H1 (cell line): ENCODE measurements at regions of chr2 and their contacts with region 1.

Region 1: DNA sequence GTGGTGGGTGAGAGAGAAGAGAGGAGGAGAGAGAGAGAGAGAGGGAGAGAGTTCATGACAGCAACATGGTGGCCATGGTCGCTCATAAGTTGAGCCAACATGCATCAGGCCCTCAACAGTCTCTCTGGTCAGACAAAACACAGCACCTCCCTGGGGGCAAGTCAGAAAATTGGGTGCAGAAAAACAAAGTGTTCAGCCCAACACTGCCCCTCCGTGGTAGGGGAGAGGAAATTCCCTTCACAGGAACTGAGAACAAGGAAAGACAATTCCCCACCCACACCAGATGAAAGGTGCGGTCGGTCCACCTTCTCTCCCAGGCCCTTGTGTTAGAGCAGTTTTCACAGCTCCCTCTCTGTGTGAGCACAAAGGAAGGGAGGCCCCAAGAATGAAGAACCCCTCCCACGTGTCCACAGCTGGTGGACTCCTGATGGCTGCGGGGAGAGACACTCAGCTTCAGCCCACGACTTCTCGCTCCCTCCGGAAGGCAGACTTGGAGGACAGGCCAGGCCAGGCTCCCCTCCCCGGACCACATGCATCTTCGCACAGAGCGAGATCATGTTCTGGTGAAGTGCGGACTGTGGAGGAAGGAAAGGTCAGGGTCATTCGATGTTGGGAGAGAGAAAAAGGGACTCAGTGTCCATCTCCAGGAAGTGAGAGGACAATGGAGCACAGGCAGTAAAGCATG is 181.7 kb downstream of the ANAPC1 start:
- DNase-seq: peak in 1 of 2 experiments; percentile 85
- H3K4me3 ChIP-seq: no peak overlapping the region
- H3K27ac ChIP-seq: peak overlapping the region; percentile 16; the same call in 1 of the 2 replicates
- H3K4me1 ChIP-seq: peaks cover 11 to 33% (median 20%) of the 10 kb centered on the region in 4 experiments
- H3K27me3 ChIP-seq: peaks cover 0 to 7% (median 0%) of the 10 kb centered on the region in 4 experiments; a peak in 1 of 7 replicates
- CTCF ChIP-seq: peak; percentile 60 to 86 (median 85)
- EP300 ChIP-seq: no peak
- POLR2A ChIP-seq: no peak
- RAD21 ChIP-seq: peak; percentile 87 to 89

Region 2: DNA sequence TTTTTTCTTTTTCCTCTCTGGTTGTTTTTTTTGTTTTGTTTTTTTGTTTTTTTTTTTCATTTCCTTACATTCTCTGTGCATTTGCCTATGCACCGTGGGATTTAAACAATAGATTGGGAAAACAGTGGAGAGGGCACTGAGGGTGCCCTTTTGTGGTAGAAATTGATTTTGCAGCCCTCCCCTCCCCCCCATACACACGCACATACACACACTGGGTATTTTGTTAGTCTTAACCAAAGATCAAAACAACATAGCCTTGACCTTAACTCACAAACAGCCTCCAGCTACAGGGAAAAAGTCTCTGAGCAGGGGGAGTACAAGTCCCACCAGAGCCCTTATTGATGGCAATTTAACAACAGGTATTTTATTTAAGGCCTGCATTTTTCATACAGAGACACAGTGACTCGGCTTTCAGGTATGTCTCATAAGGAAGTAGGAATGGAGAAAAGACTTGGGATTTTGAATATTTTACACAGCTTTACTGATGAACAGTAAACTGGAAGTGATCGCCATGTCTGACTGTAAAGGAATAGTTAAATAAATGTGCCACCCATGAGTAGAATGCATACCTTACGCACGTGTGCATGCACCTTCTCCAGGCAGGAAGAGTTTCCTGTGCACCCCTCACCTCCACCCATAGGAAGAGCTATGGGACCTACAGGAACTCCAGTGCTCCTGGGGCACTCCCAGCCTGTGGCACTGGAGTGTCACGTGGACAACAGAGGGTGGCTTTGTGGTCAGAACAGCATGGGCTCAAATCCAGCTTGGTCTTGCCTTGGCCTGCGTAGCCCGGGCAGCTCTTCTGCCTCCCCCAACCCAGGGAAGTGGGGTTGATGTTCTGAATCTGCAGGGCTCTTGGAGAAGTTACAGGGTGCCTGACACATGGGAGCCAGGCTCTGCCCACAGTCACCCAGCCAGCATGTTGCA is 84.7 kb before region 1 on chr2:
- CTCF ChIA-PET with region 1: interaction called, 31 read pairs
- POLR2A ChIA-PET with region 1: interaction called, 3 read pairs
- DNase-seq: no peak
- H3K4me3 ChIP-seq: no peak overlapping the region
- H3K27ac ChIP-seq: no peak overlapping the region
- H3K4me1 ChIP-seq: peaks cover 0 to 2% (median under 1%) of the 10 kb centered on the region in 4 experiments; a peak in 1 of 7 replicates
- H3K27me3 ChIP-seq: no peaks in the 10 kb centered on the region
- CTCF ChIP-seq: no peak
- EP300 ChIP-seq: no peak
- POLR2A ChIP-seq: no peak
- RAD21 ChIP-seq: no peak

Region 3: GRCh38 chr2:111678161-111678560 is 24.1 kb before region 1 on chr2:
- CTCF ChIA-PET with region 1: interaction called, 11 read pairs
- POLR2A ChIA-PET with region 1: no interaction called
- DNase-seq: no peak
- H3K4me3 ChIP-seq: no peak overlapping the region
- H3K27ac ChIP-seq: no peak overlapping the region
- H3K4me1 ChIP-seq: peaks cover 0 to 2% (median 2%) of the 10 kb centered on the region in 4 experiments; a peak in 5 of 7 replicates
- H3K27me3 ChIP-seq: no peaks in the 10 kb centered on the region
- CTCF ChIP-seq: no peak
- EP300 ChIP-seq: no peak
- POLR2A ChIP-seq: no peak
- RAD21 ChIP-seq: no peak

Region 4: DNA sequence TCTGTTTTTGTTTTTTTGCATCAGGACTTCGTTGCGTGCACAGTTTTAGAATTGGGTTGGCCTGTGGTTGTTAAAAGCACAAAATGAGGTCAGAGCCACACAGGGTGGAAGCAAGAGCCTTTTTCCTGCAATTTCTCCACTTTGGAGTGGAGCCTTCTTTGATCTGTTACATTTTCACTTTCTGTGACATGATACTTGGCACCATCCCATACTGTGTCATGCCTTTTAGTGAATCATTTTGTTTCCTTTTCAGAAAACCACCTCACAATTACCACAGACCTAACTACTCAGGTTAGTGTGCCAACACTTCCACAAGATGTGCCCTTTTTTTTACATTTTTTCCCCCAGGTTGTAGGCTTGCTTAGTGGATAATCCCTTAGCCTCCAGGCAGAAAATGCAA is 228.6 kb after region 1 on chr2:
- CTCF ChIA-PET with region 1: no interaction called
- POLR2A ChIA-PET with region 1: no interaction called
- DNase-seq: no peak
- H3K4me3 ChIP-seq: no peak overlapping the region
- H3K27ac ChIP-seq: no peak overlapping the region
- H3K4me1 ChIP-seq: peaks cover 0 to 3% (median 1%) of the 10 kb centered on the region in 4 experiments; a peak in 1 of 7 replicates
- H3K27me3 ChIP-seq: no peaks in the 10 kb centered on the region
- CTCF ChIP-seq: no peak
- EP300 ChIP-seq: no peak
- POLR2A ChIP-seq: no peak
- RAD21 ChIP-seq: no peak